Activated CD4-positive, alpha-beta memory T cell treated with anti-CD3 and anti-CD28 coated beads, Interleukin-2, amount 10 ng/mL, durations not matched to agents 7 days and 5 days (primary cell): ENCODE measurements at regions of chr4 and their contacts with region 1.

Region 1: DNA sequence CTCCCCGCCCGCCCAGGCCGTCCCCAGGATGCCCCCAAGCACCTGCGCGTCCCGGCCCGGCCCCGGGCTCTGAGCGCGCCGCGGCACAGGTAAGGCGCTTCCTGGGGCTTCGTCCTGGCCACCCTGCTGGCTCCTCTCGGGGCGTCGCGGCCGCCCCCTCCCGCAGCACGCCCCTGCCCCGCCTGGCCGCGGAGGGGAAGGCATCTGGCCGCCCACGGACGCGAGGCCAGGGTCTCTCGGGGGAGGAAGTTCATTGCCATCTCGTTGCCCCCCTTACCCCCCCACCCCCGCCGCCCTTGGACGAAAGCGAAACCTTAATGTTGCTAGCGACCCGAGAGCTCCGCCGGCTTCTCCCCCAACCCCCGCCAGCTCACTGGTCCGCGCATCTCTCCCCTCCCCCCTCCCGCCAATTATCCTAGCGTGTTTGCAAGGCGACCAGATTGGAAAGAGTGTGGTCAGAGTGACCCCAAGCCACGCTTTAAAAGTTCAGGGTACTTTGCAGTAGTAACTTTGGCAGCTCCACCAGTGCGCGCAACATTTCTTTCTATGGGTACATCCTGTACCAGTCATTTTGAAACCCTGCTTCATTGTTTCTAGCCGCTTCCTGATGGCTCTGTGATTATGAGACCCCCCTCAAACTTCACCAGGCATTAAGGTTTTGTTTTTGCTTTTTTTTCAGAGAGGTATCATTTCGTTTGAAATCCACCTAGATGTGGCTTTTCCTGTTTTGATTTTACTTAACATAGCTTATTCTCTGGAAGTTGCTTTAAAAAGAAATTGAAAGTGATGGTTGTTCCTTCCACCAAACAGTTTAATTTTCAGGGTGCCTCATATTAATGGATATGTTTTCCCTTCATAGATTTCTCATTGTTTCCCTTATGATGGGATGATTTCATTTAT is 626 bp downstream of the TBC1D1 start:
- DNase-seq: peak; percentile 71
- H3K4me3 Mint-ChIP-seq: peak overlapping the region; percentile 96
- H3K27ac Mint-ChIP-seq: peak overlapping the region; percentile 91
- H3K4me1 Mint-ChIP-seq: peaks cover 39% of the 10 kb centered on the region
- H3K27me3 Mint-ChIP-seq: peaks cover 13% of the 10 kb centered on the region

Region 2: GRCh38 chr4:37415845-37416369 is 475.6 kb before region 1 on chr4:
- CTCF ChIA-PET with region 1: no interaction called
- POLR2A ChIA-PET with region 1: no interaction called
- DNase-seq: no peak
- H3K4me3 Mint-ChIP-seq: no peak overlapping the region
- H3K27ac Mint-ChIP-seq: no peak overlapping the region
- H3K4me1 Mint-ChIP-seq: no peaks in the 10 kb centered on the region
- H3K27me3 Mint-ChIP-seq: peaks cover 11% of the 10 kb centered on the region

Region 3: DNA sequence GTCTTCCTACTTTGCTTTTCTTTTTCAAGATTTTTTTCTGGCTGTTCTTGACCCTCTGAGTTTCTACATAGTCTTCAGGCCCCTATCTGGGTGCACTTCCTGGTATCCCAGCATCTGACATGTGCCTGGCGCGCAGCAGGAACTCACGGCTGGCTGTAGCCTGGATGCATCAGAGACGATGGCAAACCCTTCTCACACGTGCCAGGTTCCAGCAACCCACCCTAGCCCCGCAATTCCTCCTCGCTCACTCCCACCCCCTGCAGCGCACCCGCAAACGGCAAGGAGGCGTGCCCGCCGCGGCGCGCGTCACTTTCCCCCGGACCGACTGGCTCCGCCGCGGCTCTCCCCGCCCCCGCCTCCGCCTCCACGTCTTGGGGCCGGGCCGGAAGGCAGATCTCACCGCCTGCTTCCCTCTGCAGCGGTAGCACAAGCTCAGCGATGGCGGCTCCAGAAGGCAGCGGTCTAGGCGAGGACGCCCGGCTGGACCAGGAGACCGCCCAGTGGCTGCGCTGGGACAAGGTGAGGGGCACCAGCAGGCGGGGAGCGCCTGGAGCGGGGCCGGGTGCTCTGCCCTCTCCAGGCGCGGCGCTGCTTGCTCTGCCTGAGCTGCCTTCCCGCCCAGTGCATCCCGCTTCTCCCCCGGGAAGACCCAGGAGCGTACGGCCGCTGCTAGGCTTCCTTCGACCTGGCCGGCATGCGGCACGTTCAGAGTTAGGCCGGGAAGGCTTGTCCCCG is 65.0 kb before region 1 on chr4 and contains the start of gene PGM2:
- CTCF ChIA-PET with region 1: interaction called, 3 read pairs
- POLR2A ChIA-PET with region 1: interaction called, 31 read pairs
- DNase-seq: peak; percentile 91
- H3K4me3 Mint-ChIP-seq: peak within 1 kb of the TSS; percentile 85
- H3K27ac Mint-ChIP-seq: peak within 1 kb of the TSS; percentile 78
- H3K4me1 Mint-ChIP-seq: peaks cover 40% of the 10 kb centered on the region
- H3K27me3 Mint-ChIP-seq: peaks cover 5% of the 10 kb centered on the region
- total RNA-seq, gene PGM2: 30.6 to 37.4 TPM

Region 4: GRCh38 chr4:37928426-37929416 is 37.2 kb after region 1 on chr4:
- CTCF ChIA-PET with region 1: interaction called, 4 read pairs
- POLR2A ChIA-PET with region 1: interaction called, 12 read pairs
- DNase-seq: no peak
- H3K4me3 Mint-ChIP-seq: no peak overlapping the region
- H3K27ac Mint-ChIP-seq: peak overlapping the region; percentile 37
- H3K4me1 Mint-ChIP-seq: peaks cover 28% of the 10 kb centered on the region
- H3K27me3 Mint-ChIP-seq: no peaks in the 10 kb centered on the region

Region 5: DNA sequence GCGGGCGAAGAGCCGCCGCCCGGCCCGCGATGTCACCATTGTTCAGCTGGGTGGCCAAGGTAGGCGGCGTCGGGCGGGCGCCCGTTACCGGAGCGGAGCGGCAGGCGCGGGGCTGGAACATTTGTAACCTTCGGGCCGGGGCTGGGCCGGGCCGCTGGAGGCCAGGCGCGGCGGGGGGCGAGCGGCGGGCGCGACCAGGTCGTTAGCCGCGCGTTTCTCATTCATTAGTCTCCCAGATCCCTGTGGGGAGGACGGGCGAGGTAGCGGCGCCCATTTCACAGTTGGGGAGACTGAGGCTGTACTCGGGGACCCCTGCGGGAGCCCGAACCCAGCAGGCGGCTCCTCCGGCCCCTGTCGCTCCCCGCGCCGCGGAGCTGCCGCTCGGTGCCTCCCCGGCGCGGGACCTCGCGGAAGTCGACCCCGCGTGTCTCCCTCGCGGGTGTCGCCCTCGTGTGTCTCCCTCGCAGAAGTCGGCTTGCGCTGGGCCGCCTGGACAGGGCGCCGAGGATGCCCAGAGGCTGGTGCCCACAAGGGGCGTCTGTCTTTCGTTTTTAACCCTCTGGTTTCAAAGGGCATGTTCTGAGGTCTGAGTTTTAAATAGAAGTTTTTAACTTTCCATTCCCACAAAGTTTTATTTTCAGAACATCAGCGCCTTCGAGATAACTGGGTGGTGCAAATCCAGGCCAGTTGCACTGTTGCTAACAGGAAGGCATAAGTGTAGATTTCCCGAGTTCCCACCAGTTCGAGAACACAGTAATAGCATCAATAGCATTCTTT is 86.1 kb after region 1 on chr4:
- CTCF ChIA-PET with region 1: interaction called, 6 read pairs
- POLR2A ChIA-PET with region 1: interaction called, 24 read pairs
- DNase-seq: peak; percentile 74
- H3K4me3 Mint-ChIP-seq: peak overlapping the region; percentile 77
- H3K27ac Mint-ChIP-seq: peak overlapping the region; percentile 48
- H3K4me1 Mint-ChIP-seq: peaks cover 26% of the 10 kb centered on the region
- H3K27me3 Mint-ChIP-seq: no peaks in the 10 kb centered on the region

Region 6: GRCh38 chr4:38091636-38092035 is 200.1 kb after region 1 on chr4:
- CTCF ChIA-PET with region 1: no interaction called
- POLR2A ChIA-PET with region 1: no interaction called
- DNase-seq: no peak
- H3K4me3 Mint-ChIP-seq: no peak overlapping the region
- H3K27ac Mint-ChIP-seq: peak overlapping the region; percentile 42
- H3K4me1 Mint-ChIP-seq: peaks cover 27% of the 10 kb centered on the region
- H3K27me3 Mint-ChIP-seq: no peaks in the 10 kb centered on the region